Ovary (tissue), 10 donors: ENCODE measurements at regions of chr10 and their contacts with region 1.

Region 1: DNA sequence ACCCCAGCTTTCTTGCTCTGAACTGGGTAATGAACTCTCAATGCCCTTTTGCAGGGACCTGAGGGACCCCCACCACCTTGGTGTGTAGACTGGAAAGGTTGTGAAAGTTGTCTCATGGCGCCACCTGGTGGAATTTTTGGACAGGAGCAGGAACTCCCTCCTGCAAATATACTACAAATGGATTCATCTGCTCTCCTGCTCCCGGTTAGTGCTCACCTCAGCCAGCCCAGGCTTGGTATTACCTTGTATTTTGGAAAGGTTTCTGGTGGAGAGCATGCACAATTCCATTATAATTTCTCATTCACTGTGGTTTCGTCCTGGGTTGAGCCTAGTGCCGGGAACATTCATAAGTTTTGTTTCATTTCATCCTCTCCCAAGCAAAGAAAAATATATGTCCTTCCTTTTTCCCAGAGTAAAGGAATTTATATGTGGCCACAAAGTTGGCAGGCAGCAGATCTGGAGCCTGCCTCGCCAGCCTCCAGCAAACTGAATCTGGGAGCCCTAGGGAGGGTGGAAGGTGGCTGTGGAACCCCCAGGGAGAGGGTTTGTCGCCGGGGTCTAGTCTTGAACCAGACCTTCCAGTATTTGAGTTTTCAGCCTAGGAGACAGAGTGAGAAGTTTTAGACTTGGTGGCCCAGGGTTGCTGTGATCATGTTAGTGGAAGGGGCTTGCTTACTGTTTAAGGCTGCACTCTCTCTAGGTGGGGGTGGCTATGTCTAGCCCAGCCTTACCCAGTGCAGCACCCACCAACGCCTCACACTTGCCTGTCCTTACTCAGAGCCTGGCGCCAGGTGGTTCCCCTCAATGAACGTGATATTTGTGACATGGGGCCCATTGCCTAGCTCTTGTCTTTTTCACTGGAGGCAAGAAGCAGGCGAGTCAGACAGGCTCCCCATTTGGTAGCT is 9.5 kb downstream of the FAM241B start:
- DNase-seq: peak in 4 of 5 donors; percentile 23 to 55 (median 46)
- H3K4me3 ChIP-seq: no peak overlapping the region
- H3K27ac ChIP-seq: no peak overlapping the region
- H3K4me1 ChIP-seq: no peaks in the 10 kb centered on the region
- H3K27me3 ChIP-seq: no peaks in the 10 kb centered on the region
- CTCF ChIP-seq: peak in 2 of 3 donors; percentile 30 to 49
- EP300 ChIP-seq: no peak
- POLR2A ChIP-seq: no peak

Region 2: GRCh38 chr10:69389827-69390490 is 249.6 kb before region 1 on chr10:
- intact Hi-C with region 1: no loop called
- DNase-seq: no peak
- H3K4me3 ChIP-seq: no peak overlapping the region
- H3K27ac ChIP-seq: no peak overlapping the region
- H3K4me1 ChIP-seq: no peaks in the 10 kb centered on the region
- H3K27me3 ChIP-seq: no peaks in the 10 kb centered on the region
- CTCF ChIP-seq: no peak
- EP300 ChIP-seq: no peak
- POLR2A ChIP-seq: no peak

Region 3: GRCh38 chr10:69425511-69426298 is 213.8 kb before region 1 on chr10:
- intact Hi-C with region 1: loop called in 1 of 4 experiments (anchors 10 kb)
- DNase-seq: no peak
- H3K4me3 ChIP-seq: no peak overlapping the region
- H3K27ac ChIP-seq: no peak overlapping the region
- H3K4me1 ChIP-seq: no peaks in the 10 kb centered on the region
- H3K27me3 ChIP-seq: no peaks in the 10 kb centered on the region
- CTCF ChIP-seq: no peak
- EP300 ChIP-seq: no peak
- POLR2A ChIP-seq: no peak

Region 4: GRCh38 chr10:69685802-69686585 is 46.5 kb after region 1 on chr10:
- intact Hi-C with region 1: no loop called
- DNase-seq: peak in 3 of 5 donors; percentile 27 to 49 (median 31)
- H3K4me3 ChIP-seq: no peak overlapping the region
- H3K27ac ChIP-seq: no peak overlapping the region
- H3K4me1 ChIP-seq: peaks cover 1% of the 10 kb centered on the region
- H3K27me3 ChIP-seq: no peaks in the 10 kb centered on the region
- CTCF ChIP-seq: no peak
- EP300 ChIP-seq: no peak
- POLR2A ChIP-seq: no peak

Region 5: GRCh38 chr10:69716711-69717560 is 77.4 kb after region 1 on chr10:
- intact Hi-C with region 1: loop called in 1 of 4 experiments (anchors 10 kb)
- DNase-seq: no peak
- H3K4me3 ChIP-seq: no peak overlapping the region
- H3K27ac ChIP-seq: no peak overlapping the region
- H3K4me1 ChIP-seq: no peaks in the 10 kb centered on the region
- H3K27me3 ChIP-seq: no peaks in the 10 kb centered on the region
- CTCF ChIP-seq: no peak
- EP300 ChIP-seq: no peak
- POLR2A ChIP-seq: no peak

Region 6: GRCh38 chr10:69800109-69800508 is 160.6 kb after region 1 on chr10:
- intact Hi-C with region 1: loop called in 2 of 4 experiments (anchors 10 kb)
- DNase-seq: peak in 2 of 5 donors; percentile 25 to 29
- H3K4me3 ChIP-seq: no peak overlapping the region
- H3K27ac ChIP-seq: no peak overlapping the region
- H3K4me1 ChIP-seq: peaks cover 1% of the 10 kb centered on the region
- H3K27me3 ChIP-seq: no peaks in the 10 kb centered on the region
- CTCF ChIP-seq: peak in 1 of 3 donors; percentile 37
- EP300 ChIP-seq: no peak
- POLR2A ChIP-seq: no peak

Region 7: GRCh38 chr10:70063418-70064098 is 424.0 kb after region 1 on chr10:
- intact Hi-C with region 1: no loop called
- DNase-seq: no peak
- H3K4me3 ChIP-seq: no peak overlapping the region
- H3K27ac ChIP-seq: no peak overlapping the region
- H3K4me1 ChIP-seq: no peaks in the 10 kb centered on the region
- H3K27me3 ChIP-seq: no peaks in the 10 kb centered on the region
- CTCF ChIP-seq: no peak
- EP300 ChIP-seq: no peak
- POLR2A ChIP-seq: no peak